Activated T-helper 2 cell treated with anti-CD3 and anti-CD28 coated beads, Interferon-gamma antibody, Interleukin-2, Interleukin-4, amounts not matched to agents 10 μg/mL and 5 μg/mL and 100 μg/mL, durations not matched to agents 14 hours and 24 hours and 36 hours (primary cell): ENCODE measurements at regions of chr6 and their contacts with region 1.

Region 1: DNA sequence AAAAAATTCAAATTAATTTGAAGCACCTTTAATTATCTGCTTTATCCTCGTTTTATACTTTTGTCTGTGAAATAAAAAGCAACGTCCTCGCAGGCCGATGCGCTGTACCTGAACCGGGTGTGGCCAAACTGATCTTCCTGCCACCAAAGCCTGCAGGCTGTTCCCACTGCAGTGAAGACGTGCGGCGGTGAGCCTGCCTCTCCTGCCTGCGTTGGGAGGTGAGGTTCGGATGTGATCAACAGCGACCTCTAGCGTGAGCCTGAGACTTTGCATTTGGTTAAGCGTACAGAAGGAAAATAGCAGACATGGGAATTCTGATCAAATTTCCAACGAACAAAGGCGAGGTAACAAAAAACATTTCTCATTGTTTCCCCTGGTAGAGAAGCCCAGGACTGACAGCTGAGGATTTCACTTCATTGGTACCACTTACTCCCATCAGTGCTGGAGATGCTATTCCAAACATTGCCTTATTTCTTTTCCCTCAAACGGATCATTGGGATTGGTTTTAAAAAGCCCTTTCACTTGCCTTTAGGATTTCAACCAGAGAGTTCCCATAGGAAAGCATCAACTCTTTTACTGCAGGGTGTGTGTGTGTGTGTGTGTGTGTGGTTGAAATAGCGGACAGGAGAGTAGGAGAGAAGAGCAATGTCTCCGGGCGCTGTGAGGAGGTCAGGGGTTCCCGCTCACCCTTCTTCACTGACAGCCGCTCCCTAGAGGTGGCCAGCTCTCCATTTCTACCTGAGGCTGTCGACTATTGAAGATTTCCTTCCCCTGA is 56.6 kb upstream of the CCN6 start:
- DNase-seq: peak; percentile 69
- H3K4me3 Mint-ChIP-seq: no peak overlapping the region
- H3K27ac Mint-ChIP-seq: no peak overlapping the region
- H3K4me1 Mint-ChIP-seq: peaks cover 37% of the 10 kb centered on the region
- H3K27me3 Mint-ChIP-seq: no peaks in the 10 kb centered on the region

Region 2: DNA sequence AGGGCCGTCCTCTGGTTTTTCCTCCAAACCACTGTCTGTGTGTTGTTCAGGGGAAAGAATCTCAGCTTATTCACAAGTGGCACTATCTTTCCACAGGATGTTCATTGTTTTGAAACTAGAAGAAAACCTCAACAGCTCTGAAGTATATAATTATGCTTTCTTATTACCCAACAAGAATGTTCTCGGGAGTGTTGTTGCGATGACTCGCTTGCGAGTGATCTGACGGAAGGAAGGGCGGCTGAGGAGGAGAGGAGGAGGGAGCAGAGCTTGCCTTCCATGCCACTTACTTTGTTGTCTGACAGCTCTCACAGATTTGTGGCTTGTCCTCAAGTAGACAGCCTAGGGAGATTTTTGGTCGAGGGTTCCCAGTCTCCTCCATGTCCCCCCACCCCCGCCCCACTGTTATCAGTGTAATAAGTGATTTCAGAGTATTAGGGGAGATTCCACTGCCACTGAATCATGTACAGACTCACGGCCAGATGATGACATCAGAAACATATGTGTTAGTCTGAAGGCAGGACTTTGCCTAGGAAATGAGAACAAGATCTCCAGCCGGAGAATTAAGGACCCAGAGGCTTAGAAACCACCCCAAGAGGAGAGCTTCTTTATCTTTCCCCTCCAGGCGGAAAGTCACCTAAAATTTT is 24.0 kb before region 1 on chr6:
- intact Hi-C with region 1: loop called (anchors 1 kb)
- DNase-seq: peak; percentile 24
- H3K4me3 Mint-ChIP-seq: peak overlapping the region; percentile 24
- H3K27ac Mint-ChIP-seq: peak overlapping the region; percentile 70
- H3K4me1 Mint-ChIP-seq: peaks cover 53% of the 10 kb centered on the region
- H3K27me3 Mint-ChIP-seq: peaks cover 13% of the 10 kb centered on the region